GM12878 (cell line): ENCODE measurements at regions of chr17 and their contacts with region 1.

Region 1: GRCh38 chr17:1716076-1716995 is 6.2 kb upstream of the TLCD2 start:
- DNase-seq: peak; percentile 99
- ATAC-seq: peak; percentile 89
- H3K4me3 ChIP-seq: peak overlapping the region; percentile 98
- H3K27ac ChIP-seq: peak overlapping the region; percentile 98
- H3K4me1 ChIP-seq: peaks cover 4% of the 10 kb centered on the region
- H3K27me3 ChIP-seq: no peaks in the 10 kb centered on the region
- CTCF ChIP-seq: no peak; a peak in 1 of 6 replicates
- EP300 ChIP-seq: no peak
- POLR2A ChIP-seq: peak; percentile 99
- RAD21 ChIP-seq: no peak

Region 2: GRCh38 chr17:1522626-1523025 is 193.7 kb before region 1 on chr17:
- CTCF ChIA-PET with region 1: no interaction called
- POLR2A ChIA-PET with region 1: no interaction called
- RAD21 ChIA-PET with region 1: no interaction called
- SMC1A ChIA-PET with region 1: no interaction called
- in situ Hi-C with region 1: no loop called
- intact Hi-C with region 1: no loop called
- DNase-seq: no peak
- ATAC-seq: no peak
- H3K4me3 ChIP-seq: no peak overlapping the region
- H3K27ac ChIP-seq: no peak overlapping the region
- H3K4me1 ChIP-seq: no peaks in the 10 kb centered on the region
- H3K27me3 ChIP-seq: no peaks in the 10 kb centered on the region
- CTCF ChIP-seq: no peak
- EP300 ChIP-seq: no peak
- POLR2A ChIP-seq: no peak
- RAD21 ChIP-seq: no peak

Region 3: DNA sequence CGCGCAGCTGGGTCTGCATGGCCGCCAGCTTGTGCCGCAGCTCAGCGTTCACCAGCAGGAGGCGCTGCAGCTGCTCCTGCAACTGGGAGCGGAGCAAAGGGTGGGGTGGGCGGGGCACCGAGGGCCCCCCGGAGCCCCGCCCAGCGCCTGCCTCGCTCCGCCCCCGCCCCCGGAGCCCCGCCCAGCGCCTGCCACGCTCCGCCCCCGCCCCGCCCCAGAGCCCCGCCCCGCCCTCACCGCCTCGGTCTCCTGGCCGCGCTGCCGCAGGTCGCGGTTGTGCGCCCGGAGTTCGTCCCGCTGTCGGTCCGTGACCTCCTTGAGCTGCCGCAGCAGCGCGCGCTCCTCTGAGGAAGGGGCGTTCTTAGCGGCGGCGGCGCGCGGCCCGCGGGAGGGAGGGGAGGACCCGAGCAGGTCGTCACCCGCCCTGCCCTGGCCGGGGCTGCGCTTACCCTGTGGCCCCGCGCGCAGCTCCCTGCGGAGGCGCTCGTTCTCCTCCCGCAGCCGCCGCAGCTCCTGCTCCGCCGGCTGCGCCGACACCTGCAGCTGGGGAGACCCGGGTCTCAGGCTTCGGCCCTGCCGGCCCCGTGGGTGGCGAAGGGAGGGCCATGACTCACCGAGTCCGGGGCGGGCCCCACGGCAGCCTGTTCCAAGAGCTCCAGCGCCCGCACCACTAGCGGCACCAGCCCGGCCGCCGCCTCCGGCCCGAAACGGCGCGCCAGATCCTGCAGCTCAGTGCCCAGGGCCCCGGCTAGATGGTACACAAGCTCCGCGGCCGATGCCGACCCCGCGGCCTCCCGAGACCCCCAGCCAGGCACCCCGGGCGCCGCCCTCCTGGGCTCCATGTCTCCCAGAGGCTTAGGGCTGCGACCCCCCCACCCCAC is 67.1 kb before region 1 on chr17:
- CTCF ChIA-PET with region 1: interaction called, 12 read pairs
- POLR2A ChIA-PET with region 1: interaction called, 13 read pairs
- RAD21 ChIA-PET with region 1: interaction called, 13 read pairs
- SMC1A ChIA-PET with region 1: interaction called, 3 read pairs
- in situ Hi-C with region 1: no loop called
- intact Hi-C with region 1: no loop called
- DNase-seq: peak; percentile 58
- ATAC-seq: peak; percentile 70
- H3K4me3 ChIP-seq: peak overlapping the region; percentile 64; the same call in 1 of the 2 replicates
- H3K27ac ChIP-seq: peak overlapping the region; percentile 18
- H3K4me1 ChIP-seq: peaks cover 31% of the 10 kb centered on the region
- H3K27me3 ChIP-seq: no peaks in the 10 kb centered on the region
- CTCF ChIP-seq: peak; percentile 78 to 99 (median 97)
- EP300 ChIP-seq: no peak
- POLR2A ChIP-seq: peak; percentile 73
- RAD21 ChIP-seq: peak; percentile 57

Region 4: GRCh38 chr17:1684378-1685189 is 31.8 kb before region 1 on chr17 and contains the start of gene PRPF8:
- CTCF ChIA-PET with region 1: interaction called, 9 read pairs
- POLR2A ChIA-PET with region 1: interaction called, 11 read pairs
- RAD21 ChIA-PET with region 1: interaction called, 8 read pairs
- SMC1A ChIA-PET with region 1: interaction called, 4 read pairs
- in situ Hi-C with region 1: no loop called
- intact Hi-C with region 1: no loop called
- DNase-seq: peak; percentile 95
- ATAC-seq: peak; percentile 99
- H3K4me3 ChIP-seq: peak within 1 kb of the TSS; percentile 96
- H3K27ac ChIP-seq: peak within 1 kb of the TSS; percentile 86
- H3K4me1 ChIP-seq: no peaks in the 10 kb centered on the region
- H3K27me3 ChIP-seq: no peaks in the 10 kb centered on the region
- CTCF ChIP-seq: no peak
- EP300 ChIP-seq: no peak
- POLR2A ChIP-seq: peak; percentile 99
- RAD21 ChIP-seq: no peak
- polyA plus RNA-seq, gene PRPF8: 133 to 167 TPM

Region 5: GRCh38 chr17:1752425-1753262 is 36.3 kb after region 1 on chr17:
- CTCF ChIA-PET with region 1: interaction called, 4 read pairs
- POLR2A ChIA-PET with region 1: interaction called, 10 read pairs
- RAD21 ChIA-PET with region 1: interaction called, 8 read pairs
- SMC1A ChIA-PET with region 1: interaction called, 11 read pairs
- in situ Hi-C with region 1: no loop called
- intact Hi-C with region 1: no loop called
- DNase-seq: no peak
- ATAC-seq: peak; percentile 71
- H3K4me3 ChIP-seq: no peak overlapping the region
- H3K27ac ChIP-seq: no peak overlapping the region
- H3K4me1 ChIP-seq: no peaks in the 10 kb centered on the region
- H3K27me3 ChIP-seq: no peaks in the 10 kb centered on the region
- CTCF ChIP-seq: 0 out of 6 replicates have a peak, but pooled peaks of 1 of the 3 experiments have one; percentile 11
- EP300 ChIP-seq: no peak
- POLR2A ChIP-seq: no peak
- RAD21 ChIP-seq: no peak

Region 6: DNA sequence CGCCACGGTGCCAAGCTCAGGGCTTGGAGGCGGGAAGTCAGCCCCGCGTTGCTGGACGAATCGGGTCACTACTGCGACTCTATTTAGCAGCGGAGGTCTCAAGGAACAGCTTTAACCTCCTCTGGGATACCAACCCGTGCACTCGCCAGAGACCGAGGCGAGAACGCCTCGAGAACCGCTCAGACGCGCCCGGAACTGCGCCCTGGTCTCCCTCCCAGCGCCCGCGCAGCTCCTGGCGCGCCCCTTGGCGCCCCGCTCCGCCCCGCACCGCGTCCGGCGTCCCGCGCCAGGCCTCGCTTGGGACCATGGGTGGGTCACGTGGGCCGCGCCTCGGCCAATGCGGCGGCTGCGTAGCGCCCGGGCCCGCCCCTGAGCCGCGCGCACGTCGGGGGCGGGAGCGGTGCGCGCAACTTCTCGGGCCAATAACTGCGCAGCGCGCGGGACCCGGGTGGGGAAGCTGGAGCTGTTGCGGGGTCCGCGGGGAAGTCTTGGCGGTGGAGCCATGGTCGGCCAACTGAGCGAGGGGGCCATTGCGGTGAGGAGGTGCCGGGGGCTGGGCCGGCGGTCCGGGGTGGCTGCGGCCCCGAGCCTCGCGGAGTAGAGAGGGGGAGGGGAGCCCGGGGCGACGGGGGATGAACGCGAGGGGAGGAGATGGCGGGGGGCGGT is 113.4 kb after region 1 on chr17 and contains the starts of genes RPA1 and SMYD4:
- CTCF ChIA-PET with region 1: interaction called, 26 read pairs
- POLR2A ChIA-PET with region 1: interaction called, 18 read pairs
- RAD21 ChIA-PET with region 1: interaction called, 17 read pairs
- SMC1A ChIA-PET with region 1: interaction called, 20 read pairs
- in situ Hi-C with region 1: loop called (anchors 5 kb)
- intact Hi-C with region 1: loop called (anchors 2 kb)
- DNase-seq: peak; percentile 48
- ATAC-seq: peak; percentile 97
- H3K4me3 ChIP-seq: peak within 1 kb of the TSS; percentile 98
- H3K27ac ChIP-seq: peak within 1 kb of the TSS; percentile 83
- H3K4me1 ChIP-seq: peaks cover 15% of the 10 kb centered on the region
- H3K27me3 ChIP-seq: no peaks in the 10 kb centered on the region
- CTCF ChIP-seq: no peak
- EP300 ChIP-seq: no peak
- POLR2A ChIP-seq: peak; percentile 87
- RAD21 ChIP-seq: no peak
- polyA plus RNA-seq, gene RPA1: 35.9 to 50.6 TPM
- polyA plus RNA-seq, gene SMYD4: 2.1 to 2.6 TPM

Region 7: DNA sequence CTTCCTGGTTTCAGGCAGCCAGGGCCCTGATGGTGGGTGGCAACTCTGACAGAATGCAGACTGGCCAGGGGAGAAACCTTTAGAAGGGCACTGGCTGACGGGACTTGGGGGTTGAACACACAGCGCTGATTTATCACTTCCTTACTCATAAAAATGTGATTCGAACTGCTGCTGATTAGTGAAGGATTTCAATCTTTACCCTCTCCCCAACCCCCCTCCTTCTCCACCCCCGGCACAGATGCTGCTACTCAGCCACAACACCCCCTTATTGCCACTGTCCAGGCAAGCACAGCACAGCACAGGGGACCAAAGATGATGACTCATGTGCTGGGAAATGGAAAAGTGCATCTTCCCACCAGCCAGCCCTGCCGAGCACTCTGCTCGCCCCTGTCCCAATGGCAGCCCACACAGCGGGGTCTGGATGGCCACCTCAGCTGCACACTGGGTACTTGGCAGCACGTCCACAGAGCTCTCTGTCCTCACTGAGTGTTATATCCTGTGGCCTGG is 517.2 kb after region 1 on chr17:
- CTCF ChIA-PET with region 1: no interaction called
- POLR2A ChIA-PET with region 1: interaction called, 14 read pairs
- RAD21 ChIA-PET with region 1: no interaction called
- SMC1A ChIA-PET with region 1: no interaction called
- in situ Hi-C with region 1: no loop called
- intact Hi-C with region 1: no loop called
- DNase-seq: no peak
- ATAC-seq: no peak
- H3K4me3 ChIP-seq: no peak overlapping the region
- H3K27ac ChIP-seq: no peak overlapping the region
- H3K4me1 ChIP-seq: peaks cover 43% of the 10 kb centered on the region
- H3K27me3 ChIP-seq: no peaks in the 10 kb centered on the region
- CTCF ChIP-seq: no peak
- EP300 ChIP-seq: no peak
- POLR2A ChIP-seq: no peak
- RAD21 ChIP-seq: no peak